ENCODE measurements at regions of chr7 and their contacts with region 1.

Region 1: DNA sequence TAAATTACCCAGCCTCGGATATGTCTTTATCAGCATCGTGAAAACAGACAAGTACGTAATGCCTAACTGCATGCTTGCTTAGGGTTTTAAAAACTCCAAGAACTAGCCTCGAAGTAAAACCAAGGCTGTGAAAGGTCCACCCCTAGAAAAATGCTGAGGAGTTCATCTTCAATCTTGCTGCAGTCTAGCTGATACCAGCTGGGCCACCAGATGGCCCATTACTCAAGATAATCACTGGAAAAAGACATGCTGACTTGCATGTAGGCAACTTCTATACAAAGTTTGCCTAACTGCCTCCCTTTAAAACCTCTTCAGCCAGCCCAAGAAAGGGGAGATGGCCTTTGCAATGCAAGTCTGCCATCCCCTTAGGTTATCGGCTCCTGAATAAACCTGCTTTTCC is 614.1 kb downstream of the GALNT17 start:
- DNase-seq: no peak
- CTCF ChIP-seq: no peak

Region 2: GRCh38 chr7:71695186-71695585 is 50.8 kb before region 1 on chr7:
- CTCF ChIA-PET with region 1: no interaction called
- POLR2A ChIA-PET with region 1: no interaction called
- DNase-seq: no peak
- CTCF ChIP-seq: no peak

Region 3: DNA sequence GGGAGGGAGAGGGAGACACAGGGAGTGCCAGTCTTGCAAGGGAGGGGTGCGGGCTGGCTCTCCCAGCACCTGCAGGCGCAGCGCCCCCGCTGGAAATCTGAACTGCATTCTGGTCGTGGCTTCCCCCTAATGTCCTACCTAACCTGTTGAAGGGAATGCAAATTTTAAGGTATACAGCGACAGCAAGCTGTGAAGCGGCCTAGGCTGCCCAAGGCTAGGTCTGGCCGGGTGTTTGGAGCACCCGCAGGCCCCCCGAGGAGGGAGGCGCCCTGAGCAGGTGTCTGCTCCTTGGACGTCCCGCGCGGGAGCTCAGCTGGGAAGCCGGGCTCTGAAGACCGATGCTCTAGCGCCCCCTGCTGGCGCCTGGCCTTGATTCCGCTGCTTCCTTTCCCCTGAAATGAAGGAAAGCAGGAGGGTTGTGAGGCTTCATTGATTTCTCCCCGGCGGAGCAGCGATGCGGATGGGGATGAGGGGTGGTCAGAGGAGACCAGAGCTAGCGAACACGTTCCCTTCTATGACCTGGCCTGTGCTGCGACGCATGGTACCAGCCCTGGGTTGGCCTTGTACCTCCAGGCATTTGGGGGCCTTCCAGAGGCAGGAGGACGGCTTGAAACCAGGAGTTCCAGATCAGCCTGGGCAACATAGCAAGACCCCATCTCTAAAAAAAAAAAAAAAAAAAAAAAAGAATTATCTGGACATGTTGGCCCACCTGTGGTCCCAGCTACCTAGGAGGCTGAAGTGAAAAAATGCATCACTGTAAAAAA is 12.7 kb before region 1 on chr7:
- CTCF ChIA-PET with region 1: interaction called, 14 read pairs
- POLR2A ChIA-PET with region 1: no interaction called
- DNase-seq: peak; percentile 66
- CTCF ChIP-seq: peak; percentile 91

Region 4: GRCh38 chr7:71787513-71787912 is 41.5 kb after region 1 on chr7:
- CTCF ChIA-PET with region 1: no interaction called
- POLR2A ChIA-PET with region 1: no interaction called
- DNase-seq: no peak
- CTCF ChIP-seq: no peak

Region 5: GRCh38 chr7:71961283-71961682 is 215.3 kb after region 1 on chr7:
- CTCF ChIA-PET with region 1: no interaction called
- POLR2A ChIA-PET with region 1: no interaction called
- DNase-seq: no peak
- CTCF ChIP-seq: no peak

Measured in GM10248 (cell line).